B cell (primary cell): ENCODE measurements at regions of chr20 and their contacts with region 1.

Region 1: GRCh38 chr20:50546729-50547314 is 36.6 kb downstream of the PTPN1 start:
- DNase-seq: peak; percentile 70
- ATAC-seq: peak; percentile 78
- H3K4me3 ChIP-seq: peak overlapping the region in 4 of 5 experiments; percentile 2 to 39 (median 20)
- H3K4me3 Mint-ChIP-seq: peak overlapping the region; percentile 88
- H3K27ac ChIP-seq: peak overlapping the region; percentile 48 to 83
- H3K27ac Mint-ChIP-seq: peak overlapping the region; percentile 93
- H3K4me1 ChIP-seq: peaks cover 93 to 96% of the 10 kb centered on the region in 2 donors
- H3K4me1 Mint-ChIP-seq: peaks cover 68% of the 10 kb centered on the region
- H3K27me3 ChIP-seq: no peaks in the 10 kb centered on the region
- H3K27me3 Mint-ChIP-seq: no peaks in the 10 kb centered on the region
- CTCF ChIP-seq: no peak

Region 2: DNA sequence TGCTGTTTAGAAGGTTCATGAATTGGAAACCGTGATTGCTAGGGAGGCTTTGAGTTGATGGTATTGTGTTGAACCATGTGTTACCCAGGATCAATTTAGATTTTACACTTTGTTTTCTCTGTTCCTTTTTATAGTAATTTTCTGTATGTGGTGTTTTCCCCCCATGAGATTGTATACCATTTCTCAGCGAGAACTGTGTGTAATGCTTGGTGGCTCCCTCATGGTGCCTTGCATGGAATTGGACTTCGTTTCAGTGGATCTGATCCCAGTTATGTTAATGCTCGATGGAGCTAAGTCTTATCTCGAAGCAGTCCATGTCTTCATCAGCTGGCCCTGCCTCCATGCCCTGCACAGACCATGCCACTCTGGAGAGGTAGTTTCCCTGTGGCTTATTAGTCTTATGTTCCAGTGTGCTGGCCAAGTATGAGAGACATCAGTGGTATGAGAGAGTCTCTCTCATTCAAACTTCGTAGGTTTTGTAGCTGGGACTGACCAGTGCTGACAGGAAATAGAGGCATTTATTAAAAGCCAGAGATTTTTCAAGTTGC is 17.9 kb before region 1 on chr20:
- CTCF ChIA-PET with region 1: interaction called, 3 read pairs
- POLR2A ChIA-PET with region 1: interaction called, 3 read pairs
- intact Hi-C with region 1: loop called (anchors 2 kb)
- DNase-seq: no peak
- ATAC-seq: peak; percentile 25
- H3K4me3 ChIP-seq: peak overlapping the region in 1 of 5 experiments; percentile 2
- H3K4me3 Mint-ChIP-seq: peak overlapping the region; percentile 83
- H3K27ac ChIP-seq: peak overlapping the region; percentile 35 to 69
- H3K27ac Mint-ChIP-seq: peak overlapping the region; percentile 87
- H3K4me1 ChIP-seq: peaks cover 81 to 91% of the 10 kb centered on the region in 2 donors
- H3K4me1 Mint-ChIP-seq: peaks cover 43% of the 10 kb centered on the region
- H3K27me3 ChIP-seq: no peaks in the 10 kb centered on the region
- H3K27me3 Mint-ChIP-seq: no peaks in the 10 kb centered on the region
- CTCF ChIP-seq: no peak

Region 3: GRCh38 chr20:50561379-50562078 is 14.7 kb after region 1 on chr20:
- CTCF ChIA-PET with region 1: interaction called, 4 read pairs
- POLR2A ChIA-PET with region 1: interaction called, 10 read pairs
- intact Hi-C with region 1: no loop called
- DNase-seq: no peak
- ATAC-seq: no peak
- H3K4me3 ChIP-seq: no peak overlapping the region
- H3K4me3 Mint-ChIP-seq: peak overlapping the region; percentile 6
- H3K27ac ChIP-seq: no peak overlapping the region
- H3K27ac Mint-ChIP-seq: peak overlapping the region; percentile 75
- H3K4me1 ChIP-seq: peaks cover 8 to 9% of the 10 kb centered on the region in 2 donors
- H3K4me1 Mint-ChIP-seq: peaks cover 56% of the 10 kb centered on the region
- H3K27me3 ChIP-seq: no peaks in the 10 kb centered on the region
- H3K27me3 Mint-ChIP-seq: no peaks in the 10 kb centered on the region
- CTCF ChIP-seq: no peak

Region 4: DNA sequence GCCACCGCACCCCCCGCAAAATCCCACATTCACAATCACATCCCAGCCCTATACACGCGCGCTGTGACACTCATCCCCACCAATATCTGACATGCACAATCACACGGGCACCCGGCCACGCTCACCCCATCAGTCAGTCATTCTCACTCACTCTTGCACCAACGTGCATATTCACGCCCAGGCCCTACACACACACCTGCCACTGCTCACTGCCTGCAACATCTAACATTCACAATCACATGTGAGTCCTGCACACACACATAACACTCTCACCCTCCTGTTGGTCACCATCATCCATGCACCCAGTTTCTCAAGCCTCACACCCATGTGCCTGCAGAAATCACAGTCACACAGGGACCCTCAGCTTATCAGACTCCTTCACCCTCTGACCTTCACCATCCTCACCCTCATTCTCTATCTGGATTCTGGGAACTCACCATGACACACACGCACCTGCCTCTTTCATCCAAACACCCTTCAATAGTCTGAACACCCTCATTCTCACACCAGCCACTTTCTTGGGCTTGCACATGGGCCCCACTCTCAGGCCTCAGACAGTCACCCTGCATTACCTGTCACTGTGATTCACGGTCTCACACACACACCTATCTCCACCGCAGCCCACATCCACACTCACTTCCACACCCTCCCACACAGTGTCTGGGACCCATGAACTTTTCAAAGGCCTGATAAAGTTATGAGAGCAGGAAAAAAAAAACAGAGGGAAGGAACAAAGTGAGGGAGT is 1222.1 kb after region 1 on chr20:
- CTCF ChIA-PET with region 1: no interaction called
- POLR2A ChIA-PET with region 1: no interaction called
- intact Hi-C with region 1: no loop called
- DNase-seq: no peak
- ATAC-seq: no peak
- H3K4me3 ChIP-seq: no peak overlapping the region
- H3K4me3 Mint-ChIP-seq: peak overlapping the region; percentile 86
- H3K27ac ChIP-seq: no peak overlapping the region
- H3K27ac Mint-ChIP-seq: no peak overlapping the region
- H3K4me1 ChIP-seq: peaks cover 6 to 7% of the 10 kb centered on the region in 2 donors
- H3K4me1 Mint-ChIP-seq: peaks cover 12% of the 10 kb centered on the region
- H3K27me3 ChIP-seq: peaks cover 0 to 29% (median 8%) of the 10 kb centered on the region in 4 experiments
- H3K27me3 Mint-ChIP-seq: peaks cover 51% of the 10 kb centered on the region
- CTCF ChIP-seq: no peak